ENCODE measurements at regions of chr6 and their contacts with region 1.

Region 1: DNA sequence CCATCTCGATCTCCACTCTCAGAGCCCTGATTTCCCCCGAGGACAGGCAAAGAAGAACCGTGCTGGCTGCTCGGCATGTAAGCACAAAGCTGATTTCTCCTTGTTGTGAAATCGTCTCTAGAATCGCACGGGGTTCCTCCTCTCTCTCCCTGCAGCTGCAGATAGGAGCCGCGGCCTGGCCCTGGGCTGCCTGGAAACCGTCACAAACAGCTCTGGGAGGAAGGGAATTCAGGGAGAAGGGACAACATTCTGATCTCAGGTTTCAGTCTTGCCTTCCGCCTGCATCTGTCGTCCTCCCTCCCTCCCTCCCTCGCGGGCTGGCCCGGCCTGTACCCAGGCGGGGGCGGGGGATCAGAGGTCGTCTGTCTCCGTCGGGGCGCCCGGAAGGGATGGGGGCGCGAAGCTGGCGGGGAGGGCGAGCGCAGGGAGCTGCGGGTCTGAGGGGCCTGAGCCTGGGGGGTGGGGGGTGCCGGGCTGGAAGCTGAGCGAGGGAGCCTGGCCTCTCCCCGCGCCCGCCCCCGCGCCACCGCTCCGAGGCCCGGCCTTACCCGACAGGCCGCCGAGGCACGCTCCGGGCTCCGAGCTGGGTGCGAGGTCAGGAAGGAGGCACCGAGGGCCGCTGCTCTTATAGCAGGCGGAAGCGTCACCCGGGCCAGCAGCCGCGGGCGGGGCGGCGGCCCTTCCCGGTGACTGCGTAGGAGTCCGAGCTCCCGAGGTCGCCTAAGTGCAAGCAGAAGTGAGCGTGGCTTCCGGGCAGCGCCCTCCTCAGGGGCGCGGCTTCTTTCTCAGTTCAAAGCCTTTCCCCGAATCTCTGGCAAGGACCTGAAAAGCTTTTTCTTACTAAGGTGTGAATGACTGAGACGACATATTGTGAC is at the start of gene SERPINB1:
- DNase-seq: peak; percentile 96
- H3K4me3 Mint-ChIP-seq: peak within 1 kb of the TSS; percentile 86
- H3K27ac Mint-ChIP-seq: peak within 1 kb of the TSS; percentile 93
- H3K4me1 Mint-ChIP-seq: peaks cover 67% of the 10 kb centered on the region
- H3K27me3 Mint-ChIP-seq: no peaks in the 10 kb centered on the region
- total RNA-seq, gene SERPINB1: 164 to 169 TPM

Region 2: GRCh38 chr6:2791124-2791974 is 50.2 kb before region 1 on chr6:
- CTCF ChIA-PET with region 1: interaction called, 56 read pairs
- POLR2A ChIA-PET with region 1: interaction called, 12 read pairs
- intact Hi-C with region 1: loop called (anchors 1 kb)
- DNase-seq: peak; percentile 82
- H3K4me3 Mint-ChIP-seq: no peak overlapping the region
- H3K27ac Mint-ChIP-seq: no peak overlapping the region
- H3K4me1 Mint-ChIP-seq: peaks cover 34% of the 10 kb centered on the region
- H3K27me3 Mint-ChIP-seq: no peaks in the 10 kb centered on the region

Region 3: DNA sequence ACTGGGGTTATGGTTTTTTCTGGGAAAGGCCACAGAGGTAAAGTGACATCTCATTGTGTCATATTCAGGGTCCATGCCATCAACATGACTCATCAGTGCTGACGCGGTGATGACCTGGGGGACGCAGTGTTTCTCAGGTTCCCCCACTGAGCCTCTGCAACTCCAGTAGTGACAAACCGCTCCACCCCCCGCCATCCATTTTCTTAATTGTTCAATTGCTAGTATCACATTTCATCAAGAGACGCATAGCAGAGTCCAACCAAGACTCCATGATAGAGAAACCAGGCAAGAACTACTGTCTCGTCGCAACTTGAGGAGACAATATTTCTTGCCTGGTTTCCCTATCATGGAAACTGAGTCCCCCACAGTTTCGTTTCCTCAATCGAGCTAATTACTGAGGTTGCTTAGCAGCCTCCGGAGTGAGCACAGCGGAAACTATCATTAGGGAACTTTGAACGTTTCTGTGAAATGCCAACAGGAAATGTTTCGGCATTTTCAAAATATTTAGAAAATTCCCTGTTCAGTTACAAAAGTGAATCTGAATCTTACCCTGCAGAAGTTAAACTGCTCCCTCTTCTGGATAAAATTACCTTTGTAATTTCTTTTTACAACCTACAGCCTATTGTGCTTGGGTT is 12.4 kb after region 1 on chr6:
- CTCF ChIA-PET with region 1: interaction called, 20 read pairs
- POLR2A ChIA-PET with region 1: interaction called, 28 read pairs
- intact Hi-C with region 1: loop called (anchors 1 kb)
- DNase-seq: peak; percentile 95
- H3K4me3 Mint-ChIP-seq: peak overlapping the region; percentile 63
- H3K27ac Mint-ChIP-seq: peak overlapping the region; percentile 100
- H3K4me1 Mint-ChIP-seq: peaks cover 65% of the 10 kb centered on the region
- H3K27me3 Mint-ChIP-seq: no peaks in the 10 kb centered on the region

Region 4: DNA sequence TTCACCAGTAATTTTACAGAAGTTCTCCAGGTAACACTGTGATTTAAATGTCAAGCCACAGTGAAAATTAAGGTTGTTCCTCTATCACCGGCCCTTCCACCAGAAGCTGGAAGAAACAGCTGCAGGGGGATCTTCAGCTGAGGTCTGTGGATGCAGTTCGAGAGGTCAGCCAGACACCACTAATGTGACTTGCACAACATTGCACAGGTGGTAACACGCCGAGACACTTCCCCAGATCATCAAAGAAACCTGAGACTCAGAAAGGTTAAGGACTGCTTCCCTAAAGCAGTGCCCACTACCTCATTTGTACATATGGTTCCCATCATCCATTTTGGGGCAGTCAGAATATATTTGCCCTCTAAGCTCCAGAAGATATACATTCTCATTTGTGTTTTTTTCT is 69.7 kb after region 1 on chr6:
- CTCF ChIA-PET with region 1: interaction called, 55 read pairs
- POLR2A ChIA-PET with region 1: interaction called, 6 read pairs
- intact Hi-C with region 1: loop called (anchors 1 kb)
- DNase-seq: no peak
- H3K4me3 Mint-ChIP-seq: no peak overlapping the region
- H3K27ac Mint-ChIP-seq: no peak overlapping the region
- H3K4me1 Mint-ChIP-seq: peaks cover 34% of the 10 kb centered on the region
- H3K27me3 Mint-ChIP-seq: no peaks in the 10 kb centered on the region

Region 5: GRCh38 chr6:2940010-2940850 is 98.7 kb after region 1 on chr6:
- CTCF ChIA-PET with region 1: interaction called, 28 read pairs
- POLR2A ChIA-PET with region 1: interaction called, 26 read pairs
- intact Hi-C with region 1: loop called (anchors 1 kb)
- DNase-seq: peak; percentile 92
- H3K4me3 Mint-ChIP-seq: peak overlapping the region; percentile 54
- H3K27ac Mint-ChIP-seq: peak overlapping the region; percentile 99
- H3K4me1 Mint-ChIP-seq: peaks cover 67% of the 10 kb centered on the region
- H3K27me3 Mint-ChIP-seq: peaks cover 1% of the 10 kb centered on the region